Activated CD4-positive, alpha-beta memory T cell treated with anti-CD3 and anti-CD28 coated beads for 36 hours (primary cell): ENCODE measurements at regions of chr11 and their contacts with region 1.

Region 1: DNA sequence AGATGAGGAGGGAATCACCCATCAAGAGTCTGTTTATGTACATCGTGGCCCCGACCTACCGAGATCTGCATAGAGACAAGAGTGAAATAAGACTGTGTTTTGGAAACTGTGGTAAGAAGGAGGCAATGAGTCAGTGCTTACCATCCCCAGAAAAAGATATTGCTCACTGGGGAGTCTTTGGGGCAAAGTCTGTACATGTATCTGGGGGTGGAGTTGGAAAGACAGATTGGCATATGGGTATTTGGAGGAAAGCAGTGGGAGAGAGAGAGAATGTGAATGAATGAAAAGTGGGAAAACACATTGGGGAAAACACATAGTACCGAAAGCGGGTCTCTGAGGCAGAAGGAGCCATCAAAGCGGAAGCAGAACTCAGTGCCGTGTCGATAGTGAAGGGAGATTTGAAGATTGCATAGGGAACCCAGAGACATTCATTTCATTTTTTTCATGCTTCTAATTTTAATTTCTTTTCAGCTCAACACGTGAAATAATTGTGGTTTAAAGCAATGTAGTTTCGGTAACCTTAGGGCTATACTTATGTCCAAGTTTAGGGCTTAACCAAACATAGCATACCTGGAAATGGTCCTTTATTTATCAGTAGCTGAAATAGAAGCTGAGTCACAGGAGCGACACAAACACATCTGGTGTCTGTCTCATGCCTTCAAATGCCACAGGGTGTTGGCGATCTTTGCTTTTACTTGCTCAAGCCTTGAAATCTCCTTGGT is 98.6 kb upstream of the CD44 start:
- DNase-seq: peak; percentile 79
- H3K4me3 Mint-ChIP-seq: peak overlapping the region; percentile 79
- H3K27ac Mint-ChIP-seq: peak overlapping the region; percentile 94
- H3K4me1 Mint-ChIP-seq: peaks cover 74% of the 10 kb centered on the region
- H3K27me3 Mint-ChIP-seq: peaks cover 1% of the 10 kb centered on the region

Region 2: GRCh38 chr11:35006389-35007128 is 33.8 kb before region 1 on chr11:
- CTCF ChIA-PET with region 1: interaction called, 3 read pairs
- POLR2A ChIA-PET with region 1: interaction called, 11 read pairs
- intact Hi-C with region 1: no loop called
- DNase-seq: peak; percentile 73
- H3K4me3 Mint-ChIP-seq: no peak overlapping the region
- H3K27ac Mint-ChIP-seq: no peak overlapping the region
- H3K4me1 Mint-ChIP-seq: peaks cover 49% of the 10 kb centered on the region
- H3K27me3 Mint-ChIP-seq: peaks cover 4% of the 10 kb centered on the region

Region 3: GRCh38 chr11:35066783-35067423 is 26.5 kb after region 1 on chr11:
- CTCF ChIA-PET with region 1: interaction called, 3 read pairs
- POLR2A ChIA-PET with region 1: interaction called, 3 read pairs
- intact Hi-C with region 1: loop called (anchors 1 kb)
- DNase-seq: peak; percentile 74
- H3K4me3 Mint-ChIP-seq: no peak overlapping the region
- H3K27ac Mint-ChIP-seq: peak overlapping the region; percentile 52
- H3K4me1 Mint-ChIP-seq: peaks cover 36% of the 10 kb centered on the region
- H3K27me3 Mint-ChIP-seq: no peaks in the 10 kb centered on the region

Region 4: DNA sequence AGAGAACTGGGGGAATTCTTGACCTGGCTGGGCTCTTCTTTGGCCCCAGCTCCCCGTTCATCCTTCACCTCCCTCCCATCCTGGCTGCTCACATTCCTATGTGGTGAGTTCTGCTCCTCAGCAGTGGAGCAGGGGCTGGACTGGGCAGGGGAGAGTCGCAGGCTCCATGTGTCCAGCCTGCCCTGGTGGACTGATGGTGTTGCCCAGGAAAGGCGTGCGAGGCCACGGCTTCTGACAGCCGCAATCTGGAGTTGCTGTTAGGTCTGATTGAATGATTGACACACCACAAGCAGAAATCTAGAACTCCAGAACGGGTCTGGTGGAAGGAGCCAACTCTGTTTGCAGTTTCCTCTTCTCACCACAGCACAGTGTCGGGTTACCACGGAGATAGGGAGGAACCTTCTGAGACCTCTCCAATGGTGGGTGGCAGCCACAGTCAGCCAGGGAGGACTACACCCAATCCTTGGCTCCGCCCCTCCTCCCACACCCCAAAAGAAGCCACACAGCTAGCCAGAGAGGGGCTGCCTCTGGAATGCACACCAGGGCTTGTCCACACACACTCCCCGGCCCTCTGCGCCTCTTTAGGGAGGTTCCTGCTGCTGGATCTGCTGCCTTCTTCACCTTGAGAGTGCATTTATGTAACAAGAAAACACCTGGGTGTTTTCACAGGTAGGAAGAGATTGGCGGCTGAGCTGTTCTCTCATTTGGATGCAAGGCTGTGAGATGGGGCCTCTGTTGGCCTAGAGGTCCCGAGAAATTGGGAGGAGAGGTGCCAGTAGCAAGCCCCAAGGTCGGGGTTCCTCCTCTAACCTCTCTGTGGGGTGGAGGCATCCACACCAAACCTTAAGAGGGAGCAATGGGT is 42.2 kb after region 1 on chr11:
- CTCF ChIA-PET with region 1: interaction called, 3 read pairs
- POLR2A ChIA-PET with region 1: interaction called, 4 read pairs
- intact Hi-C with region 1: loop called (anchors 1 kb)
- DNase-seq: peak; percentile 90
- H3K4me3 Mint-ChIP-seq: peak overlapping the region; percentile 62
- H3K27ac Mint-ChIP-seq: peak overlapping the region; percentile 81
- H3K4me1 Mint-ChIP-seq: peaks cover 93% of the 10 kb centered on the region
- H3K27me3 Mint-ChIP-seq: no peaks in the 10 kb centered on the region

Region 5: GRCh38 chr11:35126000-35126878 is 85.9 kb after region 1 on chr11:
- CTCF ChIA-PET with region 1: no interaction called
- POLR2A ChIA-PET with region 1: interaction called, 3 read pairs
- intact Hi-C with region 1: loop called (anchors 1 kb)
- DNase-seq: peak; percentile 73
- H3K4me3 Mint-ChIP-seq: peak overlapping the region; percentile 41
- H3K27ac Mint-ChIP-seq: peak overlapping the region; percentile 82
- H3K4me1 Mint-ChIP-seq: peaks cover 65% of the 10 kb centered on the region
- H3K27me3 Mint-ChIP-seq: no peaks in the 10 kb centered on the region

Region 6: GRCh38 chr11:35276396-35277145 is 236.2 kb after region 1 on chr11:
- CTCF ChIA-PET with region 1: no interaction called
- POLR2A ChIA-PET with region 1: no interaction called
- intact Hi-C with region 1: no loop called
- DNase-seq: peak; percentile 63
- H3K4me3 Mint-ChIP-seq: no peak overlapping the region
- H3K27ac Mint-ChIP-seq: peak overlapping the region; percentile 11
- H3K4me1 Mint-ChIP-seq: peaks cover 40% of the 10 kb centered on the region
- H3K27me3 Mint-ChIP-seq: peaks cover 2% of the 10 kb centered on the region

Region 7: DNA sequence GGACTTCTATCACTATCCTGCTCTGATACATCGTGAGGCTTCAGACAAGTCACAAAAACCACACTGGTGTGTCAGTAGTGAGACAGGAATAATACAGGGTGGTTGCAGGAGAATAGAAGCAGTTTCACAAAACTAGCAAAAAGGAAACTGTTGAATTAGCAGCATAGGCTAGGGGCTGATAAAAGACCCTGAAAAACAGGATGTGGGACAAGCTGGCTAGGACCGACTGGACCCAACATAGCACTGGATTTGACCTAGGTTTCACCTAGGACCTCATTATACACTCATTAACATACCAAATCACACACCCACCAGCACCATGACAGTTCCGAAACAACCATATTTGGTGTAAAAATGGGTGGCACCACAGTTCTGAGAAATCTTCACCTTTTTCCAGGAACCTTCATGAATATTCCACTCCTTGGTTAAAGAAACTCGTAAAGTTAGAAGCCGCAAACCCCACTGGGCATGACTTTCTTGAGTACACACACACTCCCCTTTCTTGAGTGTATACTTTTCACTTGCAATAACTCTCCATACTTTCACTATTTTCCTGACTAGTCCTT is 302.7 kb after region 1 on chr11:
- CTCF ChIA-PET with region 1: no interaction called
- POLR2A ChIA-PET with region 1: no interaction called
- intact Hi-C with region 1: loop called (anchors 5 kb)
- DNase-seq: peak; percentile 58
- H3K4me3 Mint-ChIP-seq: peak overlapping the region; percentile 42
- H3K27ac Mint-ChIP-seq: peak overlapping the region; percentile 66
- H3K4me1 Mint-ChIP-seq: peaks cover 42% of the 10 kb centered on the region
- H3K27me3 Mint-ChIP-seq: peaks cover 2% of the 10 kb centered on the region